Activated CD8-positive, alpha-beta T cell treated with anti-CD3 and anti-CD28 coated beads, Interleukin-2, amount 10 ng/mL, durations not matched to agents 7 days and 5 days (primary cell): ENCODE measurements at regions of chr2 and their contacts with region 1.

Region 1: GRCh38 chr2:102753563-102754159 is 8.2 kb upstream of the TMEM182 start:
- DNase-seq: peak; percentile 51
- ATAC-seq: peak; percentile 63
- H3K4me3 Mint-ChIP-seq: no peak overlapping the region
- H3K27ac Mint-ChIP-seq: no peak overlapping the region
- H3K4me1 Mint-ChIP-seq: no peaks in the 10 kb centered on the region
- H3K27me3 Mint-ChIP-seq: no peaks in the 10 kb centered on the region

Region 2: DNA sequence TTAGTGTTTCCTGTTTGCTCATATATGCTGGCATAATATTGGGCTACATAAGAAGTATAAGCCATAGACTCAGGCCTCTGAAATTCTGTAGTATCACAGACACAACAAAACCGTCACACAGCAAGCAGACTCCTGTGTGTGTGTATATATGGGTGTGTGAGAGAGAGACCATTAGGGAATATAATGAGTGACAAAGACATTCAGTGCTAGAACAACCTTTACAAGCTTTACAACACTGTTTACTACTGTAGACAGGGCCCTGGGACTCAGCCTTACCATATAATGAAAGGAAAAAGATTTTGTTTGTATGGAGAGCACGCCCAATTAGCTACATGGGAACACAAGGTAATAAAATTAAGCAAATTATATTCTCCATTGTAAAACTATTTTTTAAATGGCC is 57.2 kb before region 1 on chr2:
- CTCF ChIA-PET with region 1: no interaction called
- POLR2A ChIA-PET with region 1: no interaction called
- DNase-seq: no peak
- ATAC-seq: no peak
- H3K4me3 Mint-ChIP-seq: no peak overlapping the region
- H3K27ac Mint-ChIP-seq: no peak overlapping the region
- H3K4me1 Mint-ChIP-seq: no peaks in the 10 kb centered on the region
- H3K27me3 Mint-ChIP-seq: peaks cover 7% of the 10 kb centered on the region

Region 3: GRCh38 chr2:102736410-102737409 is 17.0 kb before region 1 on chr2:
- CTCF ChIA-PET with region 1: interaction called, 56 read pairs
- POLR2A ChIA-PET with region 1: no interaction called
- DNase-seq: peak; percentile 87
- ATAC-seq: peak; percentile 97
- H3K4me3 Mint-ChIP-seq: peak overlapping the region; percentile 92
- H3K27ac Mint-ChIP-seq: peak overlapping the region; percentile 88
- H3K4me1 Mint-ChIP-seq: peaks cover 30% of the 10 kb centered on the region
- H3K27me3 Mint-ChIP-seq: no peaks in the 10 kb centered on the region

Region 4: GRCh38 chr2:102743259-102743658 is 10.4 kb before region 1 on chr2:
- CTCF ChIA-PET with region 1: interaction called, 28 read pairs
- POLR2A ChIA-PET with region 1: no interaction called
- DNase-seq: no peak
- ATAC-seq: no peak
- H3K4me3 Mint-ChIP-seq: no peak overlapping the region
- H3K27ac Mint-ChIP-seq: no peak overlapping the region
- H3K4me1 Mint-ChIP-seq: no peaks in the 10 kb centered on the region
- H3K27me3 Mint-ChIP-seq: no peaks in the 10 kb centered on the region

Region 5: DNA sequence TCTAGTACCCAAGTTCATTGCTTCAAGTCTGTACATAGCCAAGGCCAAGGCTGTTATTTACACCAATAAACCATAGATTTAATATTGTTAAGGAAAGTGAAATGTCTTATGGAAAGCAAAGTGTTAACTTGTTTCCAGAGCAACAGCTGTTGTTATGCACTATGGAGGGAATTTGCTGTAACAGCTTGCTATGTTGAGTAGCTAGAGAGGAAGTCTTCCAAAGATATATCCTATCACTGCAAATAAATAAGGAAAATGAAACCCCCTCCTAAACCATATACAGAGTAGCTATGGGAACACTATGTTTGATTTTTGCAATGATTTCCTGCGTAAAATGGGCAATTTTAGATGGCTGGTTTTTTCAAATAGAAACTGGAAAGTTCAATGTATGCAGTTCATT is 29.3 kb after region 1 on chr2:
- CTCF ChIA-PET with region 1: interaction called, 10 read pairs
- POLR2A ChIA-PET with region 1: no interaction called
- DNase-seq: no peak
- ATAC-seq: no peak
- H3K4me3 Mint-ChIP-seq: no peak overlapping the region
- H3K27ac Mint-ChIP-seq: no peak overlapping the region
- H3K4me1 Mint-ChIP-seq: peaks cover 10% of the 10 kb centered on the region
- H3K27me3 Mint-ChIP-seq: no peaks in the 10 kb centered on the region

Region 6: GRCh38 chr2:102806250-102806837 is 52.7 kb after region 1 on chr2:
- CTCF ChIA-PET with region 1: interaction called, 136 read pairs
- POLR2A ChIA-PET with region 1: no interaction called
- DNase-seq: peak; percentile 58
- ATAC-seq: no peak
- H3K4me3 Mint-ChIP-seq: no peak overlapping the region
- H3K27ac Mint-ChIP-seq: no peak overlapping the region
- H3K4me1 Mint-ChIP-seq: peaks cover 18% of the 10 kb centered on the region
- H3K27me3 Mint-ChIP-seq: no peaks in the 10 kb centered on the region